ENCODE measurements at regions of chr3 and their contacts with region 1.

Region 1: DNA sequence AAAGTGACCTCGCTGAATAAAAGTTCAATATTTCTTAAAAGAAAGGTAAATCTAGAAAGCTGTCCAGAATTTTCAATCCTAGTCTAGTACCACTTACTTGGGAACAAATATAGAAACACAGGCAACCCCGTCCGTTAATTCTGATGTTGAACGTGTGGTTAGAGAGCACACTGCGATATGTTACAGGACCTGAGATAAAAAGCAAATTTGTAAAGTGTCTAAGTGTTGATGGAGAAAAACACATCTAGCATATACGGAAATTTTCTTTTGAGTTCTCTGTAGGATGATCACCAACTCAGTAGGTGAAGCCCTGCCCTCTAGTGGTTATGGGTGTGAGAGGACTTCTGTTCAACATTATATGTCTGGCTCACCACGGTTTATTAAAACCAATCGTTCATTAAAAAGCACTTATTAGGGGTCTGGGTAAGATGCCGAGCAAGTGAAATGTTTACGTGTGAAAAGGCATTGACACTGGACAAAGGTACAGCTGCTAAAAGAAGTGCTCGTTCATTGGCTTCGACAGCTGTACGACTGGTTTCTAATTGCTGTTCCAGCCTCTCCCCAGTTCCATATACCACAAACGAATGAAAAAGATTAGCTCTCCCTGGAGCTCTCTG is 1.0 kb upstream of the ATP2C1 start:
- DNase-seq: peak; percentile 70
- ATAC-seq: peak; percentile 38
- H3K4me3 ChIP-seq: peak overlapping the region; percentile 85
- H3K27ac ChIP-seq: peak overlapping the region; percentile 81
- H3K4me1 ChIP-seq: peaks cover 14% of the 10 kb centered on the region; the same call in 1 of the 2 replicates
- H3K27me3 ChIP-seq: no peaks in the 10 kb centered on the region
- CTCF ChIP-seq: peak; percentile 83

Region 2: DNA sequence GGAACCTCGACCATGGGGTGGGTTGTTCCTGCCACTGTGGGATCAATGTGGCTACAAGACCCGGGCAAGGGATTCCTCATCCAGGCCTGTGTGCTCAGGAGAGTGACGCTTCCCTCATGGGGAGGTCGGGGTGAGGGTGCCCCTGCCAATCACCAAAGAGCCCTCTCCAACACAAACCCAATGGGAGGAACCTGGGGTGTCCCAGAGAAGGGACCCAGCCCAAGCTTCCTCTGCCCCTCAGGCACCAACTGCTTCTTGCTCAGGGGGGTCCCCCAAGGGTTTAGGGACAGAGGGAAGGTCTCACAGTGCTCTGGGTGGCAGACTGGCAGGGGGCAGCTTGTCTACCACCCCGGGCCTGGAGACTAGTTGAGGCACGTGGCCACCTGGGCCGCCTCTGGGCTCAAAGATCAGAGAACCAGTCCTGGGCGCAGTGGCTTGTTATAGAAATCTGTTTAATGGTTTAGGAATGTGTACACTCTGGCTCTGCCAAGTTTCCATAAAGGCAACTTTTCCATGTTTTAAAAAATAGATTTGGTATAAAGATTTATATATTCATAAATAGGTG is 1805.6 kb before region 1 on chr3:
- CTCF ChIA-PET with region 1: no interaction called
- POLR2A ChIA-PET with region 1: no interaction called
- intact Hi-C with region 1: no loop called
- DNase-seq: no peak
- ATAC-seq: 0 out of 2 replicates have a peak, but pooled peaks have one; percentile 31
- H3K4me3 ChIP-seq: no peak overlapping the region
- H3K27ac ChIP-seq: no peak overlapping the region
- H3K4me1 ChIP-seq: no peaks in the 10 kb centered on the region
- H3K27me3 ChIP-seq: no peaks in the 10 kb centered on the region
- CTCF ChIP-seq: no peak

Region 3: GRCh38 chr3:130111185-130111864 is 781.5 kb before region 1 on chr3:
- CTCF ChIA-PET with region 1: no interaction called
- POLR2A ChIA-PET with region 1: no interaction called
- intact Hi-C with region 1: loop called (anchors 10 kb)
- DNase-seq: peak; percentile 89
- ATAC-seq: peak; percentile 100
- H3K4me3 ChIP-seq: peak overlapping the region; percentile 76
- H3K27ac ChIP-seq: peak overlapping the region; percentile 86
- H3K4me1 ChIP-seq: peaks cover 2% of the 10 kb centered on the region; the same call in 1 of the 2 replicates
- H3K27me3 ChIP-seq: no peaks in the 10 kb centered on the region
- CTCF ChIP-seq: no peak

Region 4: DNA sequence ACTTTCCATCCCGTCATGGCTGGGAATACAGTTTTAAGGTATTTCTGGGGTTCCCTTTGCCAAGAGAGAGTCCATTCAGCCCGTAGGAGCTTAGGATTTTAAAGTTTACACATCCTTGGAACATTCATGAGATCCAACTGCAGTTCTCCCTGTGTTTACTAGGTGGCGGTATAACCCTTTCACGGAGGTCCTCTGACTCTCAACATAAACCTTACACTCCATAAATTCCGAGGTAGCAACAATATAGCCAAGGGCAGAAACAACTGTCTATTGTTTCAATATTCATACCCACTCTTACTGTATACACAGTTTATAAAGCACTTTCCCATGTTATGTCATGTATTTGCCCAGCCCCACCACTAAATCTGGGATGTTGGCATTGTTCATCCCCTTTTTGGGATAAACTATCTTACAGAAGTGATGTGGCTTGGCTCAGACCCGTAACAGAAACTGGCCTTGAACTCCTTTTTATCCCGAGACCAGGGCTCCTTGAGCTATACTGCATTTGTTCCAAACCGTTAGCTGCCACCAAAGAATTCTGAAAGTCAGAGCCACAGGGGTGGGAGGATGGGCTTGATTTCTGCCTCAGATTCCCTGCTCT is 616.6 kb before region 1 on chr3:
- CTCF ChIA-PET with region 1: no interaction called
- POLR2A ChIA-PET with region 1: no interaction called
- intact Hi-C with region 1: loop called (anchors 1 kb)
- DNase-seq: peak; percentile 65
- ATAC-seq: peak; percentile 71
- H3K4me3 ChIP-seq: no peak overlapping the region
- H3K27ac ChIP-seq: no peak overlapping the region
- H3K4me1 ChIP-seq: no peaks in the 10 kb centered on the region
- H3K27me3 ChIP-seq: peaks cover 31% of the 10 kb centered on the region
- CTCF ChIP-seq: peak; percentile 83

Region 5: GRCh38 chr3:130699765-130700164 is 193.1 kb before region 1 on chr3:
- CTCF ChIA-PET with region 1: no interaction called
- POLR2A ChIA-PET with region 1: no interaction called
- intact Hi-C with region 1: loop called (anchors 1 kb)
- DNase-seq: peak; percentile 58
- ATAC-seq: peak; percentile 31; the same call in 1 of the 2 replicates
- H3K4me3 ChIP-seq: no peak overlapping the region
- H3K27ac ChIP-seq: no peak overlapping the region
- H3K4me1 ChIP-seq: no peaks in the 10 kb centered on the region
- H3K27me3 ChIP-seq: no peaks in the 10 kb centered on the region
- CTCF ChIP-seq: peak; percentile 68

Region 6: DNA sequence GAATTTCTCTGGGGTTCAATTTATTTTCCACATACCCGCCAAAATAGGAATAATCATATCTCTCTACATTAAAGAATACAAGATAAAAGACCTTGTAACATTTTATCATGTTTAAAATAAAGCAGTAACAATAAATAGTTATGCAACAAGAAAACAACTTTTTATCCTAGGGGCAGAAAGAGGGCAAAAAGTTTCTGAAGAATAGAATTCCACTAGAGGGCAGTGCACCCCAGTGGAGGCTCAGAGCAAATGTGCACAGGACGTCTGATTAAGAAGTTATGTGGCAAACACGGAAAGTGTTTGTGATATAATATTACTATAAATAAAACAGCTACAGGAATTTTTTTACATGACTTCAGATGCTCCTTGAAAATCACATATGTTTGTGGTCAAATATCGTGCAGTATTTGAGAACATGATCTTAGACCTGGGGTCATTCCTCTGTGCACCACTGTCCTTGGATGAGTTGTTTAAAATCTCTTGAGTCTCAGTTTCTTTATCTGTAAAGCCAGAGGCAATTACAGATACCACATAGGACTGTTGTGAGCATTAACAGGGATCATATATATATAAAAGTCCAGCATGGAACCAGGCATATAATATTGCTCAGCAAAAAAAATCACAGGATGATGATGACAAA is 133.0 kb before region 1 on chr3:
- CTCF ChIA-PET with region 1: interaction called, 5 read pairs
- POLR2A ChIA-PET with region 1: interaction called, 11 read pairs
- intact Hi-C with region 1: loop called (anchors 1 kb)
- DNase-seq: peak; percentile 71
- ATAC-seq: peak; percentile 50; the same call in 1 of the 2 replicates
- H3K4me3 ChIP-seq: peak overlapping the region; percentile 47; the same call in 1 of the 2 replicates
- H3K27ac ChIP-seq: no peak overlapping the region
- H3K4me1 ChIP-seq: peaks cover 23% of the 10 kb centered on the region
- H3K27me3 ChIP-seq: no peaks in the 10 kb centered on the region
- CTCF ChIP-seq: peak; percentile 85

Region 7: GRCh38 chr3:130854208-130854864 is 38.5 kb before region 1 on chr3:
- CTCF ChIA-PET with region 1: no interaction called
- POLR2A ChIA-PET with region 1: no interaction called
- intact Hi-C with region 1: no loop called
- DNase-seq: no peak
- ATAC-seq: no peak
- H3K4me3 ChIP-seq: no peak overlapping the region
- H3K27ac ChIP-seq: no peak overlapping the region
- H3K4me1 ChIP-seq: 0 out of 2 replicates have a peak, but pooled peaks cover 6% of the 10 kb centered on the region
- H3K27me3 ChIP-seq: no peaks in the 10 kb centered on the region
- CTCF ChIP-seq: no peak

Region 8: GRCh38 chr3:131026321-131027178 is 133.7 kb after region 1 on chr3 and contains the starts of genes ASTE1 and NEK11:
- CTCF ChIA-PET with region 1: no interaction called
- POLR2A ChIA-PET with region 1: no interaction called
- intact Hi-C with region 1: loop called (anchors 2 kb)
- DNase-seq: peak; percentile 81
- ATAC-seq: peak; percentile 97
- H3K4me3 ChIP-seq: peak within 1 kb of the TSS; percentile 87
- H3K27ac ChIP-seq: peak within 1 kb of the TSS; percentile 67
- H3K4me1 ChIP-seq: peaks cover 18% of the 10 kb centered on the region
- H3K27me3 ChIP-seq: no peaks in the 10 kb centered on the region
- CTCF ChIP-seq: no peak
- total RNA-seq, gene ASTE1: 2.8 and 2.9 TPM in 2 replicates
- total RNA-seq, gene NEK11: 3.1 and 5.8 TPM in 2 replicates